ENCODE measurements at regions of chr3 and their contacts with region 1.

Region 1: DNA sequence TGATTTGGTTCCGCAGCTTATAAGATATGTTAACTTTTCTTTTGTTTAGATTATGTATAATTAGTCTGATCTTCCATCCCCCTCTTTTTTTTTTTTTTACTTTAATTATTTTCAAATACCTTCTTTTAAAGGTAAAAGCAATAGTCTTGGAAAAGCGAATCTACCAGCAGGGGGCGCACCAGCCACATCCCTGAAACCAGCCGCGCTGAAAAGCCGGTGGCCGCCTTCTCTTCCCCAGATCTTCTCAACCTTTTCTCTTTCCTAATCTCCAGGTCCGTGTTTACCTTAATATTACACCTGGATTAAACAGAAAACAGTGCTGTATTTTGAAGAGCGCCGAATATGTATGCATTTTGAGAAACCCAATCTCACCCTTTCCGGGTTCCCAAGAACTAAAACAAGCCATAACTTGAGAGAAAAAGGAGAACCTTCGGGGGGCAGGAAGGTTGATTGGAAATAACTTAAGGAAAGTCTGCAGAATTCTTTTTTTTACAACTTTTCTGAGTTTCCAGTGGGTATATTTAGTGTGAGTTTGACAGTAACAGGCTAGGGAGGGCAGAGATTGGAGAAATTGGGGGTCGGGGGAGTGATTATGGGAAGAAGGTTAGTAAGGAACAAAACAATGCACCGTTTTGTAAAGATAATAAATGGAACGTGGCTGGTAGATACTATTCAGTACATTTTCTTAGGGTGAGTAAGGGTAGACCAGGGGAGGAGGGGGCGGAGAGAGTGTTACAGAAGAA is 2.0 kb upstream of the SOX2 start:
- DNase-seq: peak; percentile 65 to 86
- H3K4me3 ChIP-seq: peak overlapping the region; percentile 15; the same call in 1 of the 2 replicates
- H3K4me3 Mint-ChIP-seq: peak overlapping the region; percentile 73
- H3K27ac Mint-ChIP-seq: peak overlapping the region; percentile 62
- H3K4me1 ChIP-seq: peaks cover 13% of the 10 kb centered on the region
- H3K4me1 Mint-ChIP-seq: peaks cover 8% of the 10 kb centered on the region
- H3K27me3 ChIP-seq: no peaks in the 10 kb centered on the region
- H3K27me3 Mint-ChIP-seq: no peaks in the 10 kb centered on the region
- CTCF ChIP-seq: peak; percentile 67 to 83

Region 2: GRCh38 chr3:181431748-181432147 is 278.0 kb before region 1 on chr3:
- CTCF ChIA-PET with region 1: no interaction called
- POLR2A ChIA-PET with region 1: no interaction called
- intact Hi-C with region 1: no loop called
- DNase-seq: no peak
- H3K4me3 ChIP-seq: no peak overlapping the region
- H3K4me3 Mint-ChIP-seq: no peak overlapping the region
- H3K27ac Mint-ChIP-seq: no peak overlapping the region
- H3K4me1 ChIP-seq: no peaks in the 10 kb centered on the region
- H3K4me1 Mint-ChIP-seq: no peaks in the 10 kb centered on the region
- H3K27me3 ChIP-seq: no peaks in the 10 kb centered on the region
- H3K27me3 Mint-ChIP-seq: peaks cover 12% of the 10 kb centered on the region
- CTCF ChIP-seq: no peak

Region 3: GRCh38 chr3:181726351-181727330 is 16.9 kb after region 1 on chr3:
- CTCF ChIA-PET with region 1: no interaction called
- POLR2A ChIA-PET with region 1: no interaction called
- intact Hi-C with region 1: loop called (anchors 1 kb)
- DNase-seq: peak; percentile 55 to 79
- H3K4me3 ChIP-seq: peak overlapping the region; percentile 38
- H3K4me3 Mint-ChIP-seq: peak overlapping the region; percentile 84
- H3K27ac Mint-ChIP-seq: peak overlapping the region; percentile 67
- H3K4me1 ChIP-seq: peaks cover 10% of the 10 kb centered on the region
- H3K4me1 Mint-ChIP-seq: no peaks in the 10 kb centered on the region
- H3K27me3 ChIP-seq: no peaks in the 10 kb centered on the region
- H3K27me3 Mint-ChIP-seq: no peaks in the 10 kb centered on the region
- CTCF ChIP-seq: peak; percentile 34 to 65

Region 4: GRCh38 chr3:181851059-181851458 is 141.4 kb after region 1 on chr3:
- CTCF ChIA-PET with region 1: interaction called, 3 read pairs
- POLR2A ChIA-PET with region 1: no interaction called
- intact Hi-C with region 1: loop called (anchors 1 kb)
- DNase-seq: peak; percentile 61 to 69
- H3K4me3 ChIP-seq: no peak overlapping the region
- H3K4me3 Mint-ChIP-seq: peak overlapping the region; percentile 35
- H3K27ac Mint-ChIP-seq: peak overlapping the region; percentile 87
- H3K4me1 ChIP-seq: peaks cover 26% of the 10 kb centered on the region
- H3K4me1 Mint-ChIP-seq: peaks cover 22% of the 10 kb centered on the region
- H3K27me3 ChIP-seq: no peaks in the 10 kb centered on the region
- H3K27me3 Mint-ChIP-seq: no peaks in the 10 kb centered on the region
- CTCF ChIP-seq: no peak

Region 5: DNA sequence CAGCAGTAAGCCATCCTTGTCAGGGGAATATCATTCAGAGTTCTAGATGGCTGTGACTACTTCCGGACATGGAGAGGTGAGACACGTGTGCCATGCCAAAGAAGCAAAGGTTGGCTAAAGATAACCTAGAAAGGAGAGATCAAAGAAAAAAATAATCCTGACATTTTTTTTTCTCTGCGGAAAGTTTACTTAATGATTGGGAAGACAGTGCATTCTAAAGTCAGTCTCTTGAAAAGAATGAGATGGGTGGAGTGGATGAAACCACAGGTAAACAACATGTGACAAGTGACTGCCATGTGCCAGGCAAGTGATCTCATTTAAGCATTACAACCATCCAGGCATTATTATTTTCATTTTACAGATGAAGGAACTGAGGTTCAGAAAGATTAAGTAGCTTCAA is 438.7 kb after region 1 on chr3:
- CTCF ChIA-PET with region 1: no interaction called
- POLR2A ChIA-PET with region 1: no interaction called
- intact Hi-C with region 1: loop called (anchors 1 kb)
- DNase-seq: peak; percentile 45 to 49
- H3K4me3 ChIP-seq: no peak overlapping the region
- H3K4me3 Mint-ChIP-seq: no peak overlapping the region
- H3K27ac Mint-ChIP-seq: peak overlapping the region; percentile 76
- H3K4me1 ChIP-seq: peaks cover 18% of the 10 kb centered on the region
- H3K4me1 Mint-ChIP-seq: peaks cover 7% of the 10 kb centered on the region
- H3K27me3 ChIP-seq: no peaks in the 10 kb centered on the region
- H3K27me3 Mint-ChIP-seq: no peaks in the 10 kb centered on the region
- CTCF ChIP-seq: no peak

Region 6: DNA sequence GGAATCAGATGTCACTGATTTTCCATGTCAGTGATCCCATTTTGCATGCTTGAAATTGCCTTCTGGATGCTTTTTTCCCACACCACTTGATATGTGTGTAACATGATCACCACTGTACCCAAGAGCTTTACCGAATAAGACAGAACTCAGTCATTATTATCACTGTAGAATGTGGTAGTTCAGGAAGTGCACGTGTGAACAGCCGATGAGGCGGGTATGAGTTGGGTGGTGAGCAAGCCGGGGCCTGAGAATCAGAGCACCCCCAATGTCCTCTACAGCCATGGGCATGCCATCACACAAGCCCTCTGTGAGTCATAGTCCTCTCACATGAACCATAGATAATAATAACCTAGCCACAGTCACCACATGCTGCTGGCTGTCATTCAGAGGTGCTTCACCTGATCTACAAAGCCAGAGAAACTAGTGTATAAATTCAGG is 472.8 kb after region 1 on chr3:
- CTCF ChIA-PET with region 1: no interaction called
- POLR2A ChIA-PET with region 1: no interaction called
- intact Hi-C with region 1: loop called (anchors 1 kb)
- DNase-seq: no peak
- H3K4me3 ChIP-seq: no peak overlapping the region
- H3K4me3 Mint-ChIP-seq: no peak overlapping the region
- H3K27ac Mint-ChIP-seq: peak overlapping the region; percentile 73
- H3K4me1 ChIP-seq: peaks cover 62% of the 10 kb centered on the region
- H3K4me1 Mint-ChIP-seq: peaks cover 58% of the 10 kb centered on the region
- H3K27me3 ChIP-seq: no peaks in the 10 kb centered on the region
- H3K27me3 Mint-ChIP-seq: no peaks in the 10 kb centered on the region
- CTCF ChIP-seq: no peak

Region 7: GRCh38 chr3:182258538-182259177 is 549.0 kb after region 1 on chr3:
- CTCF ChIA-PET with region 1: no interaction called
- POLR2A ChIA-PET with region 1: no interaction called
- intact Hi-C with region 1: loop called (anchors 1 kb)
- DNase-seq: peak in 1 of 2 experiments; percentile 58
- H3K4me3 ChIP-seq: no peak overlapping the region
- H3K4me3 Mint-ChIP-seq: no peak overlapping the region
- H3K27ac Mint-ChIP-seq: no peak overlapping the region
- H3K4me1 ChIP-seq: no peaks in the 10 kb centered on the region; the same call in 1 of the 2 replicates
- H3K4me1 Mint-ChIP-seq: peaks cover 6% of the 10 kb centered on the region
- H3K27me3 ChIP-seq: no peaks in the 10 kb centered on the region
- H3K27me3 Mint-ChIP-seq: no peaks in the 10 kb centered on the region
- CTCF ChIP-seq: peak; percentile 66 to 68

Region 8: GRCh38 chr3:182618085-182618732 is 908.5 kb after region 1 on chr3:
- CTCF ChIA-PET with region 1: no interaction called
- POLR2A ChIA-PET with region 1: no interaction called
- intact Hi-C with region 1: loop called (anchors 1 kb)
- DNase-seq: peak in 1 of 2 experiments; percentile 45
- H3K4me3 ChIP-seq: no peak overlapping the region
- H3K4me3 Mint-ChIP-seq: no peak overlapping the region
- H3K27ac Mint-ChIP-seq: no peak overlapping the region
- H3K4me1 ChIP-seq: 0 out of 2 replicates have a peak, but pooled peaks cover 3% of the 10 kb centered on the region
- H3K4me1 Mint-ChIP-seq: no peaks in the 10 kb centered on the region
- H3K27me3 ChIP-seq: no peaks in the 10 kb centered on the region
- H3K27me3 Mint-ChIP-seq: no peaks in the 10 kb centered on the region
- CTCF ChIP-seq: peak; percentile 75 to 84